Naive thymus-derived CD8-positive, alpha-beta T cell (primary cell): ENCODE measurements at regions of chr14 and their contacts with region 1.

Region 1: GRCh38 chr14:101809671-101810514 is 48.4 kb downstream of the PPP2R5C start:
- DNase-seq: peak; percentile 64 to 96 (median 90)
- ATAC-seq: peak; percentile 84 to 89
- H3K4me3 Mint-ChIP-seq: peak overlapping the region; percentile 93 to 98 (median 96)
- H3K27ac Mint-ChIP-seq: peak overlapping the region; percentile 97 to 100 (median 99)
- H3K4me1 Mint-ChIP-seq: peaks cover 23 to 55% (median 46%) of the 10 kb centered on the region in 4 donors
- H3K27me3 Mint-ChIP-seq: no peaks in the 10 kb centered on the region

Region 2: GRCh38 chr14:101761032-101761880 is 48.6 kb before region 1 on chr14 and contains the start of gene PPP2R5C:
- POLR2A ChIA-PET with region 1: interaction called, 21 read pairs
- DNase-seq: peak; percentile 80 to 94 (median 89)
- ATAC-seq: peak; percentile 71 to 73
- H3K4me3 Mint-ChIP-seq: peak within 1 kb of the TSS; percentile 87 to 98 (median 93)
- H3K27ac Mint-ChIP-seq: peak within 1 kb of the TSS; percentile 43 to 96 (median 92)
- H3K4me1 Mint-ChIP-seq: peaks cover 14 to 36% (median 26%) of the 10 kb centered on the region in 4 donors
- H3K27me3 Mint-ChIP-seq: no peaks in the 10 kb centered on the region
- polyA plus RNA-seq, gene PPP2R5C: 143 to 237 (median 172) TPM

Region 3: DNA sequence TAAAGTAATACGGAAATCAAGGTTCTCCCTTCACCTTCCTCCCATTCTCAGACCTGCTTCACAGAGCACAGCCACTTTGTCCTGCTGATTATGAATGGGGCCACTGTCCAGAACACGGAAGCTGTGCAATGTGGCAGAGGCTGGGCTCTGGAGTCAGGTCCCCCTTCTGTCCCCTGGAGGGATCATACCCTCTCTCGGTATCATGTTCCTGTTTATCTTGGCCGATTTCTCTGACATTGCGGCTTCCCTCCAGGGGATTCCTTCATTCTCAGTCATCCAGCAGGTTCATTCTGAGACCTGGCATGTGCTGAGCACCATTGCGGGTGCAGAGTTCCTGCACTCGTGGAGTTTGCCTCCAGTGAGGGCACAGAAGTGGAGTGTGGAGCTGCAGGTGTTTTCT is 37.1 kb before region 1 on chr14:
- POLR2A ChIA-PET with region 1: interaction called, 13 read pairs
- DNase-seq: no peak
- ATAC-seq: no peak
- H3K4me3 Mint-ChIP-seq: no peak overlapping the region
- H3K27ac Mint-ChIP-seq: peak overlapping the region in 1 of 10 donors; percentile 36
- H3K4me1 Mint-ChIP-seq: peaks cover 12 to 54% (median 30%) of the 10 kb centered on the region in 4 donors
- H3K27me3 Mint-ChIP-seq: no peaks in the 10 kb centered on the region

Region 4: DNA sequence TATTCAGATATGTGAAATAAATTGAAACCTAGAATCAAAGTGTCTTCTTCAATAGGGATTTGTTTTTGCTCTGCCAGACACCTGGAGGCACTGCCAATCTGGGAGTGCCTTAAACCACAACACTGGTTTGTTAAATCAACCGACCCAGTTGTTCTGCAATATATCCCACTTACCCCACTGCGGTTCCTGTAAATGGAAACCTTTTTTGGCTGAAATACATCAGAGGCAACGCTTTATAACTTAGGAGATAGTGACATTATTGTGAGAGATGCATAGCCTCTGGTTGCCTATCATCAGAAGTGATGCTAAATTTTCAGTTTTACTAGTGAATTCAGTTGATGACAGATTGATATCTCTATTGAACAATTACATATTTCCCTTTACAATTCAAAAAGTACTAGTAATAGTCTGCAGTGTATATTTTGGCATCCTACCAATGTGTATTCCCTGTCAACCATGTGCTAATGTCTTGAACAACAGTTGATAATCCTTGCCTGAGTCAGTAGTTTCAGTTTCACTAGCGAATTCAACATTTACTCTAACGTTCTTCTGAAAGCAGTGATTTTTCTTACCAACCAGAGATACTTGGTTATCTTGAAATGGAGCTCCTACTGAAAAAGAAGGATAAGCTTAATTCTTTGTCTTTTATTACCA is 17.8 kb before region 1 on chr14:
- POLR2A ChIA-PET with region 1: interaction called, 14 read pairs
- DNase-seq: peak in 3 of 10 donors; percentile 40 to 50 (median 41)
- ATAC-seq: peak; percentile 77 to 83
- H3K4me3 Mint-ChIP-seq: peak overlapping the region; percentile 42 to 89 (median 78)
- H3K27ac Mint-ChIP-seq: peak overlapping the region; percentile 70 to 97 (median 88)
- H3K4me1 Mint-ChIP-seq: peaks cover 15 to 30% (median 24%) of the 10 kb centered on the region in 4 donors
- H3K27me3 Mint-ChIP-seq: no peaks in the 10 kb centered on the region

Region 5: GRCh38 chr14:101834800-101835547 is 25.1 kb after region 1 on chr14:
- POLR2A ChIA-PET with region 1: interaction called, 13 read pairs
- DNase-seq: no peak
- ATAC-seq: no peak
- H3K4me3 Mint-ChIP-seq: peak overlapping the region in 7 of 10 donors; percentile 15 to 34 (median 23)
- H3K27ac Mint-ChIP-seq: peak overlapping the region; percentile 73 to 97 (median 84)
- H3K4me1 Mint-ChIP-seq: peaks cover 37 to 92% (median 90%) of the 10 kb centered on the region in 4 donors
- H3K27me3 Mint-ChIP-seq: no peaks in the 10 kb centered on the region

Region 6: DNA sequence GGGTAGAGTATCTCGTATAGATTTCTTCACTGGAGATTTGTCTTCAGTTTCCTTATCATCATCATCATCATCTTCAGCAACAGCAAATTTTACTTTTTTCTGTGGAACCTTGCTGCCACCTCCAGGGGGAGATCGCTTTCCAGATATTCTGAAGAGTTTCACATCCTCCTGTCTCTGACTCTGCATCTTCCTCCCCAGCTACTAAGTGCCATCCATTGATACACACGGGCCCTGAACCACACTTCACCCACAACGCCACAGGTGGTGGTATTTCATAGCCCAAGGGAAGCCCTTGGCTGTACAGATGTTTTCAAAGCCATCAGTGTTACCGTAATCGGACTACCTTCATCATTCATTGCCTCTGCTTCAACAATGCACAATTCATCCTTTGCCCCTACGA is 33.8 kb after region 1 on chr14:
- POLR2A ChIA-PET with region 1: interaction called, 19 read pairs
- DNase-seq: peak in 9 of 10 donors; percentile 46 to 76 (median 56)
- ATAC-seq: peak; percentile 72 to 82
- H3K4me3 Mint-ChIP-seq: peak overlapping the region in 9 of 10 donors; percentile 15 to 69 (median 40)
- H3K27ac Mint-ChIP-seq: peak overlapping the region; percentile 65 to 95 (median 86)
- H3K4me1 Mint-ChIP-seq: peaks cover 39 to 95% (median 91%) of the 10 kb centered on the region in 4 donors
- H3K27me3 Mint-ChIP-seq: no peaks in the 10 kb centered on the region